ENCODE measurements at regions of chr3 and their contacts with region 1.

Region 1: GRCh38 chr3:190811775-190812480 is 50.6 kb downstream of the GMNC start:
- H3K4me3 Mint-ChIP-seq: no peak overlapping the region
- H3K27ac Mint-ChIP-seq: no peak overlapping the region
- H3K4me1 Mint-ChIP-seq: no peaks in the 10 kb centered on the region
- H3K27me3 Mint-ChIP-seq: no peaks in the 10 kb centered on the region

Region 2: GRCh38 chr3:190968616-190969015 is 156.7 kb after region 1 on chr3:
- intact Hi-C with region 1: no loop called
- H3K4me3 Mint-ChIP-seq: no peak overlapping the region
- H3K27ac Mint-ChIP-seq: no peak overlapping the region
- H3K4me1 Mint-ChIP-seq: no peaks in the 10 kb centered on the region
- H3K27me3 Mint-ChIP-seq: no peaks in the 10 kb centered on the region

Region 3: DNA sequence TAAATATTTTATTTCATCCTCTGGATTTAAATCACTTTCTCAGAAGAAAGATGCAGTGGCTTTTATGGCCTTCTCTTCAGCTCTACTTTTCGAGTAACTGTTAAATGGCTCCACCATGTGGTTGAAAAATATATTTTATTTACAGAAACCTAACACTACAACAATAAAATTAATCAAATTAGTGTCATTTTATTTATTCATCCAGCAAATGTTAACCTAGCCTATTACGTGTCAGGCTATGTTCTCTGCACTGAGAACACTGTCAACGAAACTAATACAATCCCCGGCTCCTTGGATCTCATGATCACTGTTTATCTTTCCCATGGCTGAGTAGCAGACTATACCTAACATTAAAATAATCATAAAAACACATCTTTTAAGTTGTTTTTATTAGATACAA is 239.1 kb after region 1 on chr3:
- intact Hi-C with region 1: loop called (anchors 2 kb)
- H3K4me3 Mint-ChIP-seq: no peak overlapping the region
- H3K27ac Mint-ChIP-seq: no peak overlapping the region
- H3K4me1 Mint-ChIP-seq: no peaks in the 10 kb centered on the region
- H3K27me3 Mint-ChIP-seq: no peaks in the 10 kb centered on the region